ENCODE measurements at regions of chr6 and their contacts with region 1.

Region 1: GRCh38 chr6:33585403-33586107 is 5.5 kb upstream of the BAK1 start:
- DNase-seq: peak; percentile 94
- H3K4me3 Mint-ChIP-seq: peak overlapping the region; percentile 71
- H3K27ac Mint-ChIP-seq: peak overlapping the region; percentile 89
- H3K4me1 Mint-ChIP-seq: peaks cover 24% of the 10 kb centered on the region
- H3K27me3 Mint-ChIP-seq: no peaks in the 10 kb centered on the region

Region 2: GRCh38 chr6:33607784-33608161 is 22.2 kb after region 1 on chr6:
- CTCF ChIA-PET with region 1: interaction called, 42 read pairs
- POLR2A ChIA-PET with region 1: no interaction called
- intact Hi-C with region 1: loop called (anchors 1 kb)
- DNase-seq: peak; percentile 70
- H3K4me3 Mint-ChIP-seq: no peak overlapping the region
- H3K27ac Mint-ChIP-seq: no peak overlapping the region
- H3K4me1 Mint-ChIP-seq: no peaks in the 10 kb centered on the region
- H3K27me3 Mint-ChIP-seq: no peaks in the 10 kb centered on the region

Region 3: DNA sequence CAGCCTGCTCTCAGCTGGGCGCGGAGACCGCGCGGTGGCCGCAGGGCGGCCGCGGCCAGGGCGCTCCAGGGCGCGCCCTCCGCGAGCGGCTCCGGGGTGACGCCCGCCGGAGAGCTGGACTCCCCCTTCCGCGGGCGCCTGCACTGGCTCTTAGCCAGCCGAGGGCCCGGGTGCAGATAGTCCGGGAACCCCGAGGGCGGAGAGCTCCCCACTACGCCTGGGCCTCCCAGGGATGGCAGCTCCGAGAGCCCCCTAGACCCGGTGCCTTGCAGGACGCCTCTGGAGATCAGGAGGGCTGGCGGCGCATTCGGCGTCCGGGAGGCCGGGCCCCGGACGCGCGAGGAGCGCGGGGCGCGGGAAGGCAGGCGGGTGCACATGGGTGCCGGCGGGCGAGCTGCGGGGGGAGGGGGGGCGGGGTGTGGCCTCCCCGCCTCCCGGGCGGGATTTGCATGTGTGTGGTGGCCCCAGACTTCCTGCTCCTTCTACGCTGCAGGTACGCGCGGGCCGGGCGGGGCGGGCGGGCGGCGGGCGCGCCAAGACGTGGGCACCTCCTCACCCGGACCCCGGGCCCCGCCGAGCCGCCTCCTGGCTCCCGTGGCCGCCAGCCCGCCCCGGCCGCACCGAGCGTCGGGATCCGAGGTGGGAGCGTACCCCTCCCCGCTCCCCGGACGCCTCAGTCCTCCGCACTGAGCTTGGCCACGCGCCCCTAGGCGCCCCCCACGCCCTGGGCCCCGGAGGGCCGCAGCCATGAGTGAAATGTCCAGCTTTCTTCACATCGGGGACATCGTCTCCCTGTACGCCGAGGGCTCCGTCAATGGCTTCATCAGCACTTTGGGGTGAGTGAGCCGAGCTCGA is 35.5 kb after region 1 on chr6 and contains the start of gene ITPR3:
- CTCF ChIA-PET with region 1: interaction called, 12 read pairs
- POLR2A ChIA-PET with region 1: interaction called, 3 read pairs
- intact Hi-C with region 1: loop called (anchors 2 kb)
- DNase-seq: peak; percentile 85
- H3K4me3 Mint-ChIP-seq: peak within 1 kb of the TSS; percentile 94
- H3K27ac Mint-ChIP-seq: peak within 1 kb of the TSS; percentile 83
- H3K4me1 Mint-ChIP-seq: peaks cover 43% of the 10 kb centered on the region
- H3K27me3 Mint-ChIP-seq: no peaks in the 10 kb centered on the region
- total RNA-seq, gene ITPR3: 41.6 to 45.6 TPM

Region 4: GRCh38 chr6:33633462-33634158 is 48.1 kb after region 1 on chr6:
- CTCF ChIA-PET with region 1: interaction called, 12 read pairs
- POLR2A ChIA-PET with region 1: no interaction called
- intact Hi-C with region 1: no loop called
- DNase-seq: peak; percentile 70
- H3K4me3 Mint-ChIP-seq: peak overlapping the region; percentile 59
- H3K27ac Mint-ChIP-seq: no peak overlapping the region
- H3K4me1 Mint-ChIP-seq: peaks cover 61% of the 10 kb centered on the region
- H3K27me3 Mint-ChIP-seq: no peaks in the 10 kb centered on the region

Region 5: GRCh38 chr6:33700391-33701050 is 115.0 kb after region 1 on chr6:
- CTCF ChIA-PET with region 1: interaction called, 29 read pairs
- POLR2A ChIA-PET with region 1: no interaction called
- intact Hi-C with region 1: loop called (anchors 1 kb)
- DNase-seq: peak; percentile 84
- H3K4me3 Mint-ChIP-seq: no peak overlapping the region
- H3K27ac Mint-ChIP-seq: peak overlapping the region; percentile 73
- H3K4me1 Mint-ChIP-seq: peaks cover 37% of the 10 kb centered on the region
- H3K27me3 Mint-ChIP-seq: no peaks in the 10 kb centered on the region

Region 6: GRCh38 chr6:33744001-33744848 is 158.7 kb after region 1 on chr6:
- CTCF ChIA-PET with region 1: interaction called, 3 read pairs
- POLR2A ChIA-PET with region 1: no interaction called
- intact Hi-C with region 1: loop called (anchors 1 kb)
- DNase-seq: peak; percentile 82
- H3K4me3 Mint-ChIP-seq: no peak overlapping the region
- H3K27ac Mint-ChIP-seq: no peak overlapping the region
- H3K4me1 Mint-ChIP-seq: peaks cover 2% of the 10 kb centered on the region
- H3K27me3 Mint-ChIP-seq: peaks cover 7% of the 10 kb centered on the region

Region 7: DNA sequence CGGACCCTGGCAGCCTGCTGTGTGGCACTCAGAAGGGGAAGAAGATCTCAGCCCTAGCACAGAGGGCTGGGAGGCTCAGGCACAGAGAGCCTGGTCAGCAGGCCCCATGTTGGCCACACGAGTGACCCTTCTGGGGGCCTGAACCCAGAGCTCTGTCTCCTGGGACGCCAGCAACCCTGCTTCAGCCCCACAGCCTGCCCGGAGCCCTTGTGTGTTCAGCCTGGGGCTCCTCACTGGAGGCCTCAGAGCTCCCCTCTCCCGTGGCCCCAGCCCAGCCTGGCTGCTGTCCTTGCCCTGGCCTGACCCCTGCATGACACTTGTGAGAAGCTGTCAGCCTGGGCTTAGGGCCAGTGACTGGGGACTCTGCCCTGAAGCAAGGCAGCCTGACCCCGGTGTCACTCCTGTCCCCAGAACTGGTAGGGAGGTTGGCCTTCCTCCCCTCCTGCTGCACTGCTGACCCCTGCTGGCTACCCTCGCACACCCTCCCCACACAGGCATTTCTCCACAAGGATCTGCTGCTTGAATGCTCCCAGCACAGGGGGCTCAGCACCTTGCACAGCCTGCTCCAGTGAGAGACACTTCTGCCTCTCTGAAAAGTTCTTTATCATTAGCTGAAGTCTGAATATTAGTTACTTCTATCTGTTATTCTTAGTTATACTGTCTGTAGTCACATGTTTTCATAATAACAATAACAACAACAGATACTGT is 176.5 kb after region 1 on chr6:
- CTCF ChIA-PET with region 1: interaction called, 5 read pairs
- POLR2A ChIA-PET with region 1: no interaction called
- intact Hi-C with region 1: loop called (anchors 1 kb)
- DNase-seq: peak; percentile 69
- H3K4me3 Mint-ChIP-seq: no peak overlapping the region
- H3K27ac Mint-ChIP-seq: no peak overlapping the region
- H3K4me1 Mint-ChIP-seq: no peaks in the 10 kb centered on the region
- H3K27me3 Mint-ChIP-seq: peaks cover 2% of the 10 kb centered on the region

Measured in activated CD4-positive, alpha-beta memory T cell treated with anti-CD3 and anti-CD28 coated beads for 36 hours (primary cell).